ENCODE measurements at regions of chr9 and their contacts with region 1.

Region 1: GRCh38 chr9:104747558-104748358 is at the start of gene NIPSNAP3A:
- DNase-seq: peak; percentile 88
- H3K4me3 ChIP-seq: peak within 1 kb of the TSS; percentile 93
- H3K27ac ChIP-seq: peak within 1 kb of the TSS; percentile 78
- H3K4me1 ChIP-seq: peaks cover 43% of the 10 kb centered on the region
- CTCF ChIP-seq: no peak
- total RNA-seq, gene NIPSNAP3A: 20.2 and 25.2 TPM in 2 replicates

Region 2: GRCh38 chr9:103397868-103398600 is 1349.7 kb before region 1 on chr9:
- CTCF ChIA-PET with region 1: no interaction called
- POLR2A ChIA-PET with region 1: no interaction called
- intact Hi-C with region 1: loop called (anchors 5 kb)
- DNase-seq: peak; percentile 31
- H3K4me3 ChIP-seq: no peak overlapping the region
- H3K27ac ChIP-seq: no peak overlapping the region
- H3K4me1 ChIP-seq: no peaks in the 10 kb centered on the region
- CTCF ChIP-seq: peak; percentile 79

Region 3: GRCh38 chr9:104177003-104177611 is 570.7 kb before region 1 on chr9:
- CTCF ChIA-PET with region 1: no interaction called
- POLR2A ChIA-PET with region 1: no interaction called
- intact Hi-C with region 1: loop called (anchors 2 kb)
- DNase-seq: peak; percentile 23
- H3K4me3 ChIP-seq: no peak overlapping the region
- H3K27ac ChIP-seq: no peak overlapping the region
- H3K4me1 ChIP-seq: no peaks in the 10 kb centered on the region
- CTCF ChIP-seq: peak; percentile 81

Region 4: GRCh38 chr9:104494808-104495207 is 252.9 kb before region 1 on chr9:
- CTCF ChIA-PET with region 1: no interaction called
- POLR2A ChIA-PET with region 1: no interaction called
- intact Hi-C with region 1: loop called (anchors 5 kb)
- DNase-seq: peak; percentile 22
- H3K4me3 ChIP-seq: no peak overlapping the region
- H3K27ac ChIP-seq: no peak overlapping the region
- H3K4me1 ChIP-seq: no peaks in the 10 kb centered on the region
- CTCF ChIP-seq: peak; percentile 68

Region 5: DNA sequence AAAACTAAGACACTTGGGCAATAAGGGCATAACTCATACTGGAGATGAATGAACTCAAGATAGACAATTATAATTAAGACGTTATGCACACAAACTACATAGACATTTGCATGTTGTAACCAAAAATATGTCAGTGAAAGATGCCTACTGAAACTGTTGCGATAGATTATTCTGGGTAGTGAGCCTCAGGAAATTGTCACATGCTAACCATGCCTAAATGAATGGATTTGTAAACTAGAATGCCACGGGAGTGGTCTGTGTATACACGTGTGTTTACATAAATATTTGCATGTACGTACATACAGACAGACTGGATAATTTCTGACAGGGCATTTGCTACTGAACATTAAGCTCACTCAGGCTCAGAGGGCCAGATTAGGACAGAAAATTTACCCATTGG is 17.4 kb after region 1 on chr9:
- CTCF ChIA-PET with region 1: interaction called, 3 read pairs
- POLR2A ChIA-PET with region 1: interaction called, 52 read pairs
- intact Hi-C with region 1: no loop called
- DNase-seq: no peak
- H3K4me3 ChIP-seq: peak overlapping the region; percentile 20
- H3K27ac ChIP-seq: no peak overlapping the region
- H3K4me1 ChIP-seq: peaks cover 29% of the 10 kb centered on the region
- CTCF ChIP-seq: no peak

Region 6: GRCh38 chr9:105168870-105169319 is 421.1 kb after region 1 on chr9:
- CTCF ChIA-PET with region 1: no interaction called
- POLR2A ChIA-PET with region 1: no interaction called
- intact Hi-C with region 1: no loop called
- DNase-seq: no peak
- H3K4me3 ChIP-seq: no peak overlapping the region
- H3K27ac ChIP-seq: no peak overlapping the region
- H3K4me1 ChIP-seq: no peaks in the 10 kb centered on the region
- CTCF ChIP-seq: no peak

Region 7: GRCh38 chr9:105341434-105342144 is 593.8 kb after region 1 on chr9:
- CTCF ChIA-PET with region 1: no interaction called
- POLR2A ChIA-PET with region 1: no interaction called
- intact Hi-C with region 1: no loop called
- DNase-seq: no peak
- H3K4me3 ChIP-seq: no peak overlapping the region
- H3K27ac ChIP-seq: no peak overlapping the region
- H3K4me1 ChIP-seq: no peaks in the 10 kb centered on the region
- CTCF ChIP-seq: no peak

Region 8: DNA sequence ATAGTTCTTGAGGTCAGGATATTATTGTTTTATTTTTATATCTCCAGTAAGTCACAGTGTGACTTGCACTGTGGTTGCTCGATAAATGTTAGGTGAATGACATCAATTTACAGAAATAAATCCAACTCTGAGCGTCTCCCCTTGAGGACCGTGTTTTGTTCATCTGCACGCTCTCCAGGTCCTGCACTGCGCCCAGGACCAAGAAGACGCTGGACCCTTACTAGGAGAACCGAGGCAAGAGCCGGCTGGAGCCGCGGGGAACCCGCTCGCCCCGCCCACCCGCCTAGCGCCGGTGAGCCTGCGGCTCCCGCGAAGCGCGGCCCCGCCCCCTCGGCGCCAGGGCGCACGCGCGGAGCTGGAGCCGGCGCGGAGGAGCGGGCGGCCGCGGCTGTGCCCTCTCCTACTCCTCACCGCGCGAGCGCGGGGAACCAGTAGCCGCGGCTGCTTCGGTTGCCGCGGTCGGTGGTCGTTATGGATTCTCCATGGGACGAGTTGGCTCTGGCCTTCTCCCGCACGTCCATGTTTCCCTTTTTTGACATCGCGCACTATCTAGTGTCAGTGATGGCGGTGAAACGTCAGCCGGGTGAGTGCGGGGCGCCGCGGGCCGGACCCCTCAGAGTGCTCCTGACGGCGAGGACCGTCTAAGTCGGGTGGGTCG is 946.6 kb after region 1 on chr9 and contains the start of gene TMEM38B:
- CTCF ChIA-PET with region 1: no interaction called
- POLR2A ChIA-PET with region 1: no interaction called
- intact Hi-C with region 1: loop called (anchors 10 kb)
- DNase-seq: peak; percentile 86
- H3K4me3 ChIP-seq: peak within 1 kb of the TSS; percentile 84
- H3K27ac ChIP-seq: no peak within 1 kb of the TSS
- H3K4me1 ChIP-seq: peaks cover 19% of the 10 kb centered on the region
- CTCF ChIP-seq: no peak
- total RNA-seq, gene TMEM38B: 11.9 and 15.9 TPM in 2 replicates